Activated naive CD4-positive, alpha-beta T cell treated with anti-CD3 and anti-CD28 coated beads for 36 hours (primary cell): ENCODE measurements at regions of chr1 and their contacts with region 1.

Region 1: DNA sequence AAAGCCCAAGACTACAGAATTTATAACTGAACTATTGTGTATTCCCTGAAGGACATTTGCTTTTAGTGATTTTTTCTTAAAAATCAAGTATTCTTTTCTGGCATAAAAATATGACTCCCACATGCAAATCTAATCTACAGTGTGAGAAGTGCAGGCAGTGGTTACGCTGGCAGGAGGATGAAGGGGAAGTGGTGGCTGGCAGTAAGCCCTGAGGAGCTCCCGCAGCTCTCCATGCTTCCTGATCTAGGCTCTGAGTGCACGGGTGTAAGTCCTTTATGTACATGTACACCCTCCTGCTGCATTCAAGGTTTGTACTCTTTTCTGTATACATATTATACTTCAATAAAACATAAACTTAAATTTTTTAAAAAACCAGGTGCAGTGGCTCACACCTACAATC is 67.5 kb upstream of the PRDX6 start:
- DNase-seq: no peak
- H3K4me3 Mint-ChIP-seq: no peak overlapping the region
- H3K27ac Mint-ChIP-seq: no peak overlapping the region
- H3K4me1 Mint-ChIP-seq: peaks cover 36% of the 10 kb centered on the region
- H3K27me3 Mint-ChIP-seq: no peaks in the 10 kb centered on the region

Region 2: DNA sequence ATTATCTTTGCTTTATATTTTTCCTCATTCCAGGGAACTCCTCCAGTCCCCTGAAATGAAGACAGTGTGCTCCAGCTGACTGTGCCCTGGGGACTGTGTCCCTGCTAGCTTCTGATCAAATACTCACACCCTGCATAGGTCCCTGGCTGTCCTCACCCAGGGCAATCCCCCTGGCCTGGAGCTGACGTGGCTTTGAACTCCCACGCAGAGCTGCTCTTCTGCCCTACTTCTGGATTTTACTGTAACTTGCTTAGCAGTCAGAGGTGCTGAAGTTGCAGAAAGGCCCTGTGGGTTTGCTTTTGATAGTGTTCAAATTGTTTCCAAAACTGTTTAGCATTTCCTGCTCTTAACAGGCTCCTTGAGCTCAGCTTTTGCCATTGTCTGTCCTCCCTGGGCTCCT is 564.2 kb before region 1 on chr1:
- CTCF ChIA-PET with region 1: no interaction called
- intact Hi-C with region 1: no loop called
- DNase-seq: peak; percentile 89
- H3K4me3 Mint-ChIP-seq: no peak overlapping the region
- H3K27ac Mint-ChIP-seq: peak overlapping the region; percentile 7
- H3K4me1 Mint-ChIP-seq: peaks cover 16% of the 10 kb centered on the region
- H3K27me3 Mint-ChIP-seq: peaks cover 28% of the 10 kb centered on the region

Region 3: GRCh38 chr1:173255214-173255813 is 154.3 kb before region 1 on chr1:
- CTCF ChIA-PET with region 1: interaction called, 3 read pairs
- intact Hi-C with region 1: loop called (anchors 1 kb)
- DNase-seq: peak; percentile 30
- H3K4me3 Mint-ChIP-seq: no peak overlapping the region
- H3K27ac Mint-ChIP-seq: no peak overlapping the region
- H3K4me1 Mint-ChIP-seq: no peaks in the 10 kb centered on the region
- H3K27me3 Mint-ChIP-seq: no peaks in the 10 kb centered on the region

Region 4: DNA sequence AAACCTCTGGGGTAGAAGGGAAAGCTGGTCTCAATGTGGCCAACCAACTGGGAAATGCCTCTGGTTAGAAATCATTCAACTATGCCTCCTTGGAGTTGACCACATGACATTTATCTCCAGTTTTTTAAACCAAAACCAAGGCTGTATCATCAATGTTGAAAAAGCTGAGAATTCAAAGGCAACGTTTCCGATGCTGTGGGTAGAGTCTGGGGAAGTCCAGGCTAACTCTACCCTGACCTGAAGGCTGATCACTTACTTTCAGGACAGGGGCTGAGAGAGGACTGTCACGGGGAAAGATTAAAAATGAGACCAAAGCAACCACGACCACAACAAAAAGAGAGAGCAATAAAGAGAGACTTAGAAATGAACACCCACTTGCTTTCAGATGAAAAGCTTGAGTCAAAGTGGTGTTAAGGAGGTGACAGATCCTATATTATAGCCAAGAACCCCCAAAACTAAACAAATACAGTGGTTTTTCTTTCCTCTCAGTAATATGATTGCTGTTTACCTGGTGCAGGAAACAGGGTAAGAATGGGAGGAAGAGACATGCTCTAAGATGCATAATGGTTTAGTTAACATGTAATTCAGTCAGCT is 111.7 kb before region 1 on chr1:
- CTCF ChIA-PET with region 1: no interaction called
- intact Hi-C with region 1: loop called (anchors 1 kb)
- DNase-seq: peak; percentile 76
- H3K4me3 Mint-ChIP-seq: no peak overlapping the region
- H3K27ac Mint-ChIP-seq: peak overlapping the region; percentile 2
- H3K4me1 Mint-ChIP-seq: peaks cover 41% of the 10 kb centered on the region
- H3K27me3 Mint-ChIP-seq: no peaks in the 10 kb centered on the region

Region 5: DNA sequence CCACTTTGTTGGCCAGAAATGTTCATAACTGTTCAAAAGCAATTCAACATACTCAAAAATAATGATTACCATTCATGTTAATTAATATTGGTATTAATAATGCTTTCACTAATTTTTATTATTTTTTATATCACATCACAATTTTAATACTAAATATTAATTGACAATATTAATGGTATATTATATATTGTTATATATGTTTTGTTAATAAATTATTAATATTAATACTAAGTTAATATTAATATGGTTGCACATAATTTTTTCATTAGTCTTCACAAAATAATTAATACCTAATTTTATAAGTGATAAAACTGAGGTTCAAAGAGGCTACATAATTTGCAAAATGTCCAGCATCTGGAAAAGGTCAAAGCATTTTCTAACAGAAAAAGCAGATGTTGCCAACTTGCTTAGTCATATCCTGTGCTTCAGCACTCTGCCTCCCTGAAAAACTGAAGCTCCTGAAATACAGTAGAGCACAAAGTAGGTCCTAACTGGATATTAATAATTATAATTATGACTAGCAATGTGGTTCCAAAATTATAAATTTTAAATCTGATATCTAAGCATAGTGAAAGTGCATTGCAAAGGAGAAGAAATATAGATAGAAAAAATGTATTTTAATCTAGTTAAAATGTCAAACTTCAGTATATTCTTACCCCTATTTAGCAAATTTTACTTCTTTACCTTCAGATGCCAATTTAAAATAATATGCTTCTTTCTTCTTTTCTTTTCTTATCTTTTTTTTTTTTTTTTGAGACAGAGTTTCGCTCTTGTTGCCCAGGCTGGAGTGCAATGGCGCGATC is 79.3 kb before region 1 on chr1:
- CTCF ChIA-PET with region 1: no interaction called
- intact Hi-C with region 1: loop called (anchors 2 kb)
- DNase-seq: no peak
- H3K4me3 Mint-ChIP-seq: no peak overlapping the region
- H3K27ac Mint-ChIP-seq: no peak overlapping the region
- H3K4me1 Mint-ChIP-seq: peaks cover 25% of the 10 kb centered on the region
- H3K27me3 Mint-ChIP-seq: no peaks in the 10 kb centered on the region

Region 6: GRCh38 chr1:173360487-173361063 is 49.0 kb before region 1 on chr1:
- CTCF ChIA-PET with region 1: no interaction called
- intact Hi-C with region 1: loop called (anchors 5 kb)
- DNase-seq: no peak
- H3K4me3 Mint-ChIP-seq: no peak overlapping the region
- H3K27ac Mint-ChIP-seq: no peak overlapping the region
- H3K4me1 Mint-ChIP-seq: peaks cover 27% of the 10 kb centered on the region
- H3K27me3 Mint-ChIP-seq: no peaks in the 10 kb centered on the region